Activated T-helper 1 cell treated with anti-CD3 and anti-CD28 coated beads, Interleukin-12 subunit alpha, Interleukin-12 subunit beta, Interleukin-2, Interleukin-4 antibody, amounts not matched to agents 30 ng/mL and 10 ng/mL and 1 ng/mL, durations not matched to agents 14 hours and 24 hours and 36 hours (primary cell): ENCODE measurements at regions of chr6 and their contacts with region 1.

Region 1: GRCh38 chr6:20401205-20402091 is at the start of gene E2F3:
- DNase-seq: peak; percentile 99
- H3K4me3 Mint-ChIP-seq: peak within 1 kb of the TSS; percentile 99
- H3K27ac Mint-ChIP-seq: peak within 1 kb of the TSS; percentile 97
- H3K4me1 Mint-ChIP-seq: peaks cover 42% of the 10 kb centered on the region
- H3K27me3 Mint-ChIP-seq: peaks cover 2% of the 10 kb centered on the region
- total RNA-seq, gene E2F3: 30.3 and 30.5 TPM in 2 replicates

Region 2: GRCh38 chr6:20092071-20092566 is 309.3 kb before region 1 on chr6:
- intact Hi-C with region 1: loop called (anchors 5 kb)
- DNase-seq: no peak
- H3K4me3 Mint-ChIP-seq: no peak overlapping the region
- H3K27ac Mint-ChIP-seq: no peak overlapping the region
- H3K4me1 Mint-ChIP-seq: no peaks in the 10 kb centered on the region
- H3K27me3 Mint-ChIP-seq: no peaks in the 10 kb centered on the region

Region 3: DNA sequence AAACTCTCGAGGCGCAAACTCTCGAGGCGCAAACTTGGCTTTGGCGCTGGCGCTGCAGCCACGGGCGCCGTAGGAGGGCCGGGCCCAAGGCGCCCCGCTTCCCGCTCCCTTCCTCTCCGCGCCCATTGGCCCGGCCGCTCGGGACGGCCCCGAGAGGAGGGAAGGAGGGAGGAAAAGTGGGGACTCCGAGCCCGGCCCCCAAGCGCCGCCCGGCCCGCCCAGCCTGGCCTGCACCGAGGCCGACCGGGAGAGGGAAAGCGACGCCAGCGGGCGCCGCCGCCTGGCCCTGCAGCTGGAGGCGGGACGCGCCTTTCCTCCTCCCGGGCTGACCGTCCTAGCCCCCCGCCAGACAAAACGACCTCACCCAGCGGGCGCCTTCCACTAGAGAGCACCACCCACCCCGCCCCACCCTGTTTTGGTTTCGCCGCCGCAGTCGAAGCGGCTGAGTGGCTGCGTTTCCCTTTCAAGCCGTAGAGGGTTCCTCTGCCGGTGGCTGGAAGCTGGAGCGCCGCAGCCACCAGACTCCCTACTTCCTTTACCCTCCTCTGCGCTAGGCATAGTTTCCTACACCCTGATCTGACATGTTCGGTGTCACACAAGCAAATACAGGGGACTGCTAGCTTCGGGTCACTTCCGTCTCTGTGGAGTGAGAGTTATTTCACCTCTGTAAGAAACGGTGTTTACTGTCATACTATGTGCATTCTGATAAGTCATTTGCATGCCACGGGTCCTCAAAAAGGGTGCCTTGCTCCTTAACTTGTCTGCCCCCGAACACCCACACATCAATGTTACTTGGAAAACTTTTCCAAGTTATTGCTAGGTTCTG is 188.8 kb before region 1 on chr6 and contains the start of gene MBOAT1:
- intact Hi-C with region 1: loop called (anchors 1 kb)
- DNase-seq: peak; percentile 72
- H3K4me3 Mint-ChIP-seq: peak within 1 kb of the TSS; percentile 93
- H3K27ac Mint-ChIP-seq: peak within 1 kb of the TSS; percentile 95
- H3K4me1 Mint-ChIP-seq: peaks cover 48% of the 10 kb centered on the region
- H3K27me3 Mint-ChIP-seq: peaks cover 7% of the 10 kb centered on the region
- total RNA-seq, gene MBOAT1: 12.2 and 13.5 TPM in 2 replicates

Region 4: DNA sequence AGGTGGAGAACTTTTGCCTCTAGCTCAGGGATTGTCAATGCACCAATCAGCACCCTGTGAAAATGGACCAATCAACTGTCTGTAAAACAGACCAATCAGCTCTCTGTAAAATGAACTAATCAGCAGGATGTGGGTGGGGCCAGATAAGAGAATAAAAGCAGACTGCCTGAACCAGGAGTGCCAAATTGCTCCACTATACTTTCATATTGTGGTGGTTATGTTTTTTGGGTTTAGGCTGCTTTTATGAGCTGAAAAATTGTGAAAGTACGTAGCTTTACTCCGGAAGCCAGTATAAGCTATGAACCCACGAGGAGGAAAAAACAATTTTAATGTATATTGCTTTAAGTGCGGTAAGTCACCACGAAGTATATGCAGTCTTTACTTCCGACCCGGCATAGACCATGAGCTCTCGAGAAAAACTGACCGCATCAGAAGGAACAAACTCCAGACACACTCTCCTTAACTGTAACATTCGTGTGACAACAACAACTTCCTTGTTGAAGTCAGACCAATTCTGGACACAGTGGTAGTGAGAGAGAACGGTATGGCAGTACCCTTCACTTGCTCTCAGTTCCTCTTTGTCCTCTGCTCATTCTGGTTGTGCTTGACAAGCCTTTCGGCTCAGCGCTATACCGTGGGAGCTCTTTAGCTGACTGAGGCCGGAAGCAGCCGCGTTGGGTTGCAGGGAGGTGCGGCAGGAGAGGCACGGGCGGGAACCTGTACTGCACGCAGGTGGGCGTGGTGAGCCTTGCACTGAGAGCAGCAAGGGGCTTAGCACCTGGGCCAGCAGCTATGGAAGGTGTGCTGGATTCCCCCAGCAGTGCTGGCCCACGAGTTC is 81.7 kb before region 1 on chr6:
- intact Hi-C with region 1: loop called (anchors 1 kb)
- DNase-seq: peak; percentile 66
- H3K4me3 Mint-ChIP-seq: peak overlapping the region; percentile 83
- H3K27ac Mint-ChIP-seq: peak overlapping the region; percentile 97
- H3K4me1 Mint-ChIP-seq: peaks cover 17% of the 10 kb centered on the region
- H3K27me3 Mint-ChIP-seq: no peaks in the 10 kb centered on the region

Region 5: GRCh38 chr6:20366091-20366832 is 35.2 kb before region 1 on chr6:
- intact Hi-C with region 1: loop called (anchors 1 kb)
- DNase-seq: peak; percentile 42
- H3K4me3 Mint-ChIP-seq: peak overlapping the region; percentile 67
- H3K27ac Mint-ChIP-seq: peak overlapping the region; percentile 94
- H3K4me1 Mint-ChIP-seq: peaks cover 58% of the 10 kb centered on the region
- H3K27me3 Mint-ChIP-seq: no peaks in the 10 kb centered on the region

Region 6: GRCh38 chr6:20534295-20535262 is 133.1 kb after region 1 on chr6 and contains the start of gene CDKAL1:
- intact Hi-C with region 1: loop called (anchors 1 kb)
- DNase-seq: peak; percentile 91
- H3K4me3 Mint-ChIP-seq: peak within 1 kb of the TSS; percentile 98
- H3K27ac Mint-ChIP-seq: peak within 1 kb of the TSS; percentile 97
- H3K4me1 Mint-ChIP-seq: peaks cover 54% of the 10 kb centered on the region
- H3K27me3 Mint-ChIP-seq: peaks cover 3% of the 10 kb centered on the region
- total RNA-seq, gene CDKAL1: 32.2 and 32.6 TPM in 2 replicates